Activated CD4-positive, alpha-beta T cell treated with anti-CD3 and anti-CD28 coated beads for 36 hours (primary cell): ENCODE measurements at regions of chr6 and their contacts with region 1.

Region 1: DNA sequence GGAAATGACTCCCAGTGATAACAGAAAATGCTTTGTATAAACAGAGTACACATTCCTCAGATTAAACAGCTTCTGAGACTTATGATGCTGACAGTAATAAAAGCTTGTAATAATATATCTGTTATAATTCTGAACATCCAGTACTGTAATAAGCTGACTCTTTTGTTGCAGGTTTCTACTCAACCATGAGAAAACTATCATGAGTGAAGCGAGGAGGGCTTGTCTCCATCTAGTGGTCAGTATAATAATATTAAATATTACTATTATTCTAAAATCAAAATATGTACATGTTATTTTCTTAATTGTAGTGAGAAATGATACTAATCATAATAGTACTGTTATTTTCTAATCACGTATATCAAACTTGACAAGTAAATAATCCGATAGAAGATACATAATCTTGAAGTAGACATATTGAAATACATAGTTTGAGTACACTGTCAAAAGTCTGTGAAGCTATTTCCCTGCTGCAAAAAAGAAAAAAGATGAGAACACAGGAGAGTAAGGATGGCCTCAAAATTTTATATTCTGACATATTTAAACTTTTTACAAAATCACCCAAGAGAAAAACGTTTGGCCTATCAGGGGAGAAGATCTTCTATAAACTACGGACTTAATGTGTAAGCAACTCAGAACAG is 183.1 kb downstream of the MOXD1 start:
- DNase-seq: no peak
- ATAC-seq: no peak
- H3K4me3 Mint-ChIP-seq: no peak overlapping the region
- H3K27ac Mint-ChIP-seq: no peak overlapping the region
- H3K4me1 Mint-ChIP-seq: no peaks in the 10 kb centered on the region
- H3K27me3 Mint-ChIP-seq: peaks cover 5% of the 10 kb centered on the region

Region 2: DNA sequence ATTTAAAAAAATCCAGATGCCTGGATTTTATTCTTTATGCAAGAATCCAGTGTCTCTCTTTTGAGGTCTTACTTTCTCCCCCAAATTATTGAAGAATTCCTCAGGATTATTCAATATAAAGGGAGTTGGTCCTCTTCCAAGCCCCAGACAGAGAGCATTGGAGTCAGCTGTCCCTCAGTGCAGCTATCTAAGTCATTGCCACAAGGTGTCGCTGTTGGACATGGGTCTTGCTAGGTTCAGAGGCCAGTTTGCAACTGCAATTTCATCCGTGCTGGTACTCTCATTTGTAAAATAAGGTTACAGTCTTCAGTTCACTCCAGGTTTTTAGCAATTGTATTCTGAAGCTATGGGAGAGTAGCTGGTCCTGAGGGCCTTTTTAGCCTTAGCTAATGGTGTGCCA is 294.8 kb before region 1 on chr6:
- CTCF ChIA-PET with region 1: interaction called, 3 read pairs
- POLR2A ChIA-PET with region 1: no interaction called
- intact Hi-C with region 1: loop called (anchors 1 to 5 kb)
- DNase-seq: peak; percentile 70
- ATAC-seq: peak; percentile 44
- H3K4me3 Mint-ChIP-seq: no peak overlapping the region
- H3K27ac Mint-ChIP-seq: no peak overlapping the region
- H3K4me1 Mint-ChIP-seq: no peaks in the 10 kb centered on the region
- H3K27me3 Mint-ChIP-seq: peaks cover 10% of the 10 kb centered on the region

Region 3: GRCh38 chr6:132333639-132334520 is 115.7 kb after region 1 on chr6:
- CTCF ChIA-PET with region 1: no interaction called
- POLR2A ChIA-PET with region 1: no interaction called
- intact Hi-C with region 1: no loop called
- DNase-seq: no peak
- ATAC-seq: no peak
- H3K4me3 Mint-ChIP-seq: no peak overlapping the region
- H3K27ac Mint-ChIP-seq: no peak overlapping the region
- H3K4me1 Mint-ChIP-seq: no peaks in the 10 kb centered on the region
- H3K27me3 Mint-ChIP-seq: peaks cover 12% of the 10 kb centered on the region